ENCODE measurements at regions of chr12 and their contacts with region 1.

Region 1: DNA sequence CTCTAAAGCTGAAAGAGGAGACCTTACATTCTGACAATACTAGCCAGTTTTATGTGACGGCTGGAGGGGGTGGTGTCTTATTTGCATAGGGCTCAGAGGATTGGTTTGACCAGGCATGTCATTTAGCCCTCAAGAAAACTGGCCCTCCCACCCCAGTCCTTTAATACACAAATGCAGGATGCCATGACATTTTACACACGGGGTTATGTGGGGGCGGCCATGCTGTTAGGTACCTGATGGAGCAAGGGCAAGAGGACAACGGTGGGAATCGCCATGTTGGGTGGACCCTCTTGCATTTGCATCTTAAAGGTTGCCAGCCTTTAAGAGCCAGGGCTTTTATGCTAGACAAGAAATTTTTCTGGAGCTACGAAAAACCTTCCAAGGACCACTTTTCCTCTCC is 23.3 kb downstream of the MDM2 start:
- DNase-seq: no peak
- ATAC-seq: no peak
- H3K4me3 ChIP-seq: no peak overlapping the region
- H3K4me3 Mint-ChIP-seq: no peak overlapping the region
- H3K27ac ChIP-seq: no peak overlapping the region
- H3K27ac Mint-ChIP-seq: no peak overlapping the region
- H3K4me1 ChIP-seq: no peaks in the 10 kb centered on the region
- H3K4me1 Mint-ChIP-seq: peaks cover 15% of the 10 kb centered on the region
- H3K27me3 ChIP-seq: no peaks in the 10 kb centered on the region
- H3K27me3 Mint-ChIP-seq: no peaks in the 10 kb centered on the region
- CTCF ChIP-seq: no peak

Region 2: GRCh38 chr12:68844788-68845695 is 13.8 kb after region 1 on chr12:
- CTCF ChIA-PET with region 1: interaction called, 18 read pairs
- POLR2A ChIA-PET with region 1: interaction called, 5 read pairs
- intact Hi-C with region 1: no loop called
- DNase-seq: no peak
- ATAC-seq: no peak
- H3K4me3 ChIP-seq: no peak overlapping the region
- H3K4me3 Mint-ChIP-seq: no peak overlapping the region
- H3K27ac ChIP-seq: no peak overlapping the region
- H3K27ac Mint-ChIP-seq: no peak overlapping the region
- H3K4me1 ChIP-seq: no peaks in the 10 kb centered on the region
- H3K4me1 Mint-ChIP-seq: no peaks in the 10 kb centered on the region
- H3K27me3 ChIP-seq: no peaks in the 10 kb centered on the region
- H3K27me3 Mint-ChIP-seq: no peaks in the 10 kb centered on the region
- CTCF ChIP-seq: no peak

Region 3: DNA sequence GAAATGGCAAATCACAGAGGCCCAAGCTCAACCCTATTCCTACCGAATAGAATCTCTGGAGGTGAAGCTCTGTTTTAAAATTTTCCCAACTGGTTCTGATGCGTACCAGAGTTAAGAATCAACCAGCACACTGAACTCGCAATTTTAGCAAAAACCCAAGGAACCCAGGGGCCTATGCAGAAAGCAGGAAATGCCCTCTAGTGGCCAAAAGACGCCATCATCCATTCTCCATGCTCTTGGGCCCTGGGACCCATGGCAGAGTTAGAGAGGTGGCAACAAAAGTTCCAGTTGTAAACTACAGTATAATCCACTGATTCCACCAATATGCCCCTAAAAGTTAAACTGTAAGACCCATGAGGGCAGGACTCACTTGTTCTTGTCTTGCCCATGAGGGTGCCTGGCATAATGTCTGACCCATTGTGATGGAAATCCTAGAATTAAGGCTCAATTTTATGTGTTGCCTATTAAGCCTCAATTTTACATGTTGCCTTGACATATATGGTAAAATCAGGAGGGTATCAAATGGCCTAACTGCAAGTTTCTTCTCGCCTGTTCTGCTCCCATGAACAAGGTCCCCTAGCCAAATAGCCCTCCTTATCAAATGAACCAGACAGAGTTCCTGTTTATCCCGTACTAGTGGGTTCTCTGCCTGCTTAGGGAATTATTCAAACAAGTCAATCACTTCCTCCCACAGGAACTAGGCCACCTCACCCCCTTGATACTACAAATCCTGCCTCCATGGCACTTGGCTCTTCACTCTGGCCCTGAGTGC is 239.2 kb after region 1 on chr12:
- CTCF ChIA-PET with region 1: no interaction called
- POLR2A ChIA-PET with region 1: no interaction called
- intact Hi-C with region 1: loop called in 1 of 2 experiments (anchors 10 kb)
- DNase-seq: peak; percentile 23 to 74 (median 44)
- ATAC-seq: peak; percentile 71
- H3K4me3 ChIP-seq: no peak overlapping the region
- H3K4me3 Mint-ChIP-seq: no peak overlapping the region
- H3K27ac ChIP-seq: no peak overlapping the region
- H3K27ac Mint-ChIP-seq: no peak overlapping the region
- H3K4me1 ChIP-seq: no peaks in the 10 kb centered on the region
- H3K4me1 Mint-ChIP-seq: no peaks in the 10 kb centered on the region
- H3K27me3 ChIP-seq: peaks cover 0 to 4% of the 10 kb centered on the region in 2 experiments
- H3K27me3 Mint-ChIP-seq: peaks cover 20% of the 10 kb centered on the region
- CTCF ChIP-seq: peak; percentile 85

Region 4: DNA sequence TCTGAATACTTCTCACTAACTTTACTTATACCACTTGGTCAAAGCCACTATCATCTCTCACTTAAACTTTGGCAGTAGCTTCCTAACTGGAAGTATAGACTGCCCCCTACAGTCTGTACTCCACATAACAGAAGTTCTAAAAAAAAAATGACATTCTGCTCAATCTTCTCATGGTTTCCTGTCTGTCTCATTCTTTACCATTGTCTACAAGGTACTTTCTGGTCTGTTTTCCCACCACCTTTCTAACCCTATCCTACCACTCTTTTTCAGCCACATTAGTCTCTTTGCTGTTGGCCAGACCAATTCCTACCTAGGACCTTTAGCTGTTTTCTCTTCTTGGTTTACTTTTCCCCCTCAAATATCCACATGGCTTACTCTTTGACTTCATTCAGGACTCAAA is 422.8 kb after region 1 on chr12:
- CTCF ChIA-PET with region 1: no interaction called
- POLR2A ChIA-PET with region 1: no interaction called
- intact Hi-C with region 1: loop called (anchors 10 kb)
- DNase-seq: peak in 3 of 14 experiments; percentile 71 to 84 (median 82)
- ATAC-seq: peak; percentile 91
- H3K4me3 ChIP-seq: no peak overlapping the region
- H3K4me3 Mint-ChIP-seq: no peak overlapping the region
- H3K27ac ChIP-seq: peak overlapping the region in 1 of 2 donors; percentile 8
- H3K27ac Mint-ChIP-seq: peak overlapping the region; percentile 19
- H3K4me1 ChIP-seq: no peaks in the 10 kb centered on the region
- H3K4me1 Mint-ChIP-seq: peaks cover 56% of the 10 kb centered on the region
- H3K27me3 ChIP-seq: no peaks in the 10 kb centered on the region
- H3K27me3 Mint-ChIP-seq: no peaks in the 10 kb centered on the region
- CTCF ChIP-seq: peak; percentile 74